ENCODE measurements at regions of chr7 and their contacts with region 1.

Region 1: DNA sequence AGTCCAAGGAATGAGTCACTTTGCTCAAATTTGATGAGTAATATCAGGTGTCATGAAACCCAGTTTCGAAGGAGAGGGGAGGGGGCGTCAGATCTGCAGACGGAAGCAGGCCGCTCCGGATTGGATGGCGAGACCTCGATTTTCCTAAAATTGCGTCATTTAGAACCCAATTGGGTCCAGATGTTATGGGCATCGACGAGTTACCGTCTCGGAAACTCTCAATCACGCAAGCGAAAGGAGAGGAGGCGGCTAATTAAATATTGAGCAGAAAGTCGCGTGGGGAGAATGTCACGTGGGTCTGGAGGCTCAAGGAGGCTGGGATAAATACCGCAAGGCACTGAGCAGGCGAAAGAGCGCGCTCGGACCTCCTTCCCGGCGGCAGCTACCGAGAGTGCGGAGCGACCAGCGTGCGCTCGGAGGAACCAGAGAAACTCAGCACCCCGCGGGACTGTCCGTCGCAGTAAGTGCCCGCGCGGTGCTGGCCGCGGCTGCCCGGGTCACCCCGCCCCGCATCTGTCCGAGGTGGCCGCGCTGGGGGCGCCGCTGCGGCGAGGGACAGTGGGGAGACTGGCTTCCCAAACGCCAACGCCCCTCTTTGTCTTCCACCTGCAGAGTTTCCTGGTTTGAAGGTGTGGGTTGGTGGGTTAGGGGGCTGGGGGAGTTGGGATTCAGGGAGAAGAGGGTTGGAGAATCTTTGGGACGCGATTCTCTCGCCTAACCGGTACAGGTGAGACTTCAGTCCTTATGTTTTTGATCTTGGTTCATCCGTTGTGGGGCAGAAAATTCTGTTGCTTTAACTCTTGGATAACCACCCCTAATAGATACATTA is at the start of gene TAC1:
- DNase-seq: peak; percentile 20
- ATAC-seq: no peak
- H3K4me3 Mint-ChIP-seq: peak within 1 kb of the TSS; percentile 27
- H3K27ac Mint-ChIP-seq: no peak within 1 kb of the TSS
- H3K4me1 Mint-ChIP-seq: peaks cover 25% of the 10 kb centered on the region
- H3K27me3 Mint-ChIP-seq: peaks cover 58% of the 10 kb centered on the region
- total RNA-seq, gene TAC1: 0.54 to 0.62 TPM

Region 2: DNA sequence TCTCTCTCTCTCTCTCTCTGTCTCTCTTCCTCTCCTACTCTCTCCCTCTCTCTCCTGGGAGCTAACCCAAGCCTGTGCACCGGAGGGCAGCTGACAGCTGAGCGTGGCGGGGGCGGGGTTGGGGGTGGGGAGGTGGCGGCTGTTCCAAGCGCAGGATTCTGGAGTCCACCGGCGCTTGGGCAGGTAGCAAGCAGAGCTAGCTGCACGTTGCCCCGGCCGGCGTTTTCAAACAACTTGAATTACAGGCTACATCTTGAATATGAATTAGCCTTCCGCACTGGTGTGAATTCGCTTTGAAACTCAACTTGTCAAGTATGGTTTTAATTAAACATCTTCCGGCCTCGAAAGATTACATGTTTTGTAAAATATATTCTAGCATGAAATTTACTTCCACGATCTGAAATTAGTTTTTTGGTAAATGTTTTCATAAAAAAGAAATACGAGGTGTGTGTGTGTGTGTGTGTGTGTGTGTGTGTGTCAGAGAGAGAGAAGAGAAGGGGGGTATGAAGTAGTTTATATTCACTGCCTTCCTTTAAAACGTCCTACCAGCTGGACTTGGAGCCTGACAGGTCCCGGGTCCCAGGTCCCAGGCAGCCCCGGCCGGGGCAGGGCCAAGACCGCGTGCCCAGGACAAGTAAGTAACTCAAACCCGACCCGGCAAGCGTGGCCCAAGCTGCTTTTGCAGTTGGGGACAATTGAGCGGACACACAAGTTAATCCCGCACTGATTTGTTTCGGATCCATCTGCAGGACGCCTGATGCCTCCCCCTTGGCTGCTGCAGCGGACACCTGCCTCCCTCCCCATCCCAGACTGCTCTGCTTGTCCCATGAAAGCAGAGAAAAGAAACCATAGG is 735.6 kb before region 1 on chr7:
- CTCF ChIA-PET with region 1: no interaction called
- POLR2A ChIA-PET with region 1: no interaction called
- intact Hi-C with region 1: loop called in 1 of 2 experiments (anchors 5 kb)
- DNase-seq: no peak
- ATAC-seq: no peak
- H3K4me3 Mint-ChIP-seq: no peak overlapping the region
- H3K27ac Mint-ChIP-seq: no peak overlapping the region
- H3K4me1 Mint-ChIP-seq: peaks cover 5% of the 10 kb centered on the region
- H3K27me3 Mint-ChIP-seq: peaks cover 79% of the 10 kb centered on the region

Region 3: GRCh38 chr7:97081521-97082300 is 650.2 kb before region 1 on chr7:
- CTCF ChIA-PET with region 1: no interaction called
- POLR2A ChIA-PET with region 1: no interaction called
- intact Hi-C with region 1: no loop called
- DNase-seq: no peak
- ATAC-seq: no peak
- H3K4me3 Mint-ChIP-seq: no peak overlapping the region
- H3K27ac Mint-ChIP-seq: no peak overlapping the region
- H3K4me1 Mint-ChIP-seq: no peaks in the 10 kb centered on the region
- H3K27me3 Mint-ChIP-seq: peaks cover 27% of the 10 kb centered on the region

Region 4: DNA sequence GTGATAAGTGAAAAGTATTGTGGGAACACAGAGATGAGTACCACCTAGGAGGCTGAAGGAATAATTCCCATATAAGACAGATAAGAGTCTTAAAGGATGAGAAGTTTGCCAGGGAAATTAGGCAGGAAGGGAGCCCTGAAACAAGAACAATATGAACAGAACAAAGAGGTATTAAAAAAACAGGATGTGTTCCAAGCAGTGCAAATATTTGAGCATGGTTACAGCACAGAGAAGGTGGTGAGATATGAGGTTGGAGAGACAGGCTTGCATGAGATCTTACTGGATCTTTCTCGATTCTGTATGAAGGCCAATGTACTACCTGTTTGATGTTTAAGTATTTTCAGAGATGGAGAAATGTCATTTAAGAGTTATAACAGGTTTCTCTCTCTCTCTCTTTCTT is 20.3 kb after region 1 on chr7:
- CTCF ChIA-PET with region 1: no interaction called
- POLR2A ChIA-PET with region 1: no interaction called
- intact Hi-C with region 1: no loop called
- DNase-seq: no peak
- ATAC-seq: no peak
- H3K4me3 Mint-ChIP-seq: no peak overlapping the region
- H3K27ac Mint-ChIP-seq: no peak overlapping the region
- H3K4me1 Mint-ChIP-seq: no peaks in the 10 kb centered on the region
- H3K27me3 Mint-ChIP-seq: peaks cover 6% of the 10 kb centered on the region